ENCODE measurements at regions of chr17 and their contacts with region 1.

Region 1: GRCh38 chr17:31373150-31374093 is 18.1 kb upstream of the RAB11FIP4 start:
- DNase-seq: no peak
- H3K4me3 ChIP-seq: peak overlapping the region in 1 of 8 donors; percentile 30
- H3K27ac ChIP-seq: peak overlapping the region in 7 of 8 donors; percentile 3 to 71 (median 51)
- H3K4me1 ChIP-seq: peaks cover 0 to 48% (median 43%) of the 10 kb centered on the region in 6 donors
- H3K27me3 ChIP-seq: no peaks in the 10 kb centered on the region
- CTCF ChIP-seq: peak; percentile 46 to 82 (median 65)
- POLR2A ChIP-seq: no peak

Region 2: GRCh38 chr17:31015639-31016038 is 357.8 kb before region 1 on chr17:
- intact Hi-C with region 1: loop called (anchors 10 kb)
- DNase-seq: no peak
- H3K4me3 ChIP-seq: no peak overlapping the region
- H3K27ac ChIP-seq: no peak overlapping the region
- H3K4me1 ChIP-seq: peaks cover 0 to 9% (median 0%) of the 10 kb centered on the region in 6 donors
- H3K27me3 ChIP-seq: no peaks in the 10 kb centered on the region
- CTCF ChIP-seq: no peak
- POLR2A ChIP-seq: no peak

Region 3: DNA sequence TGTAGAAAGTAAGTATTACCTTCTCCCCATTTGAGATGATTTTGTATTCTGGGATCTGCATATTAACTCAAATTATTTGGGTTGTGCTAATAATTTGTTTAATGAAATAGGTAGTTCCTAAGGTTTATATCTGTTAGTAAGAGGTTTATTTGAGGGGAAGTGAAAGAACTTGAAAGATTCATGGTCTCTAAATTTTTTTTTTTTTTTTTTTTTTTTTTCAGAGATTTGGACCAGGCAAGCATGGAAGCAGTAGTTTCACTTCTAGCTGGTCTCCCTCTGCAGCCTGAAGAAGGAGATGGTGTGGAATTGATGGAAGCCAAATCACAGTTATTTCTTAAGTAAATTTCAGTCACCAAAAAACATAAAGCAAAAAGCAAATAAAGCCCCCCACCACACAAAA is 141.6 kb before region 1 on chr17:
- intact Hi-C with region 1: loop called (anchors 10 kb)
- DNase-seq: no peak
- H3K4me3 ChIP-seq: no peak overlapping the region
- H3K27ac ChIP-seq: no peak overlapping the region
- H3K4me1 ChIP-seq: peaks cover 0 to 17% (median 5%) of the 10 kb centered on the region in 6 donors
- H3K27me3 ChIP-seq: no peaks in the 10 kb centered on the region
- CTCF ChIP-seq: no peak
- POLR2A ChIP-seq: no peak